ENCODE measurements at regions of chr6 and their contacts with region 1.

Region 1: DNA sequence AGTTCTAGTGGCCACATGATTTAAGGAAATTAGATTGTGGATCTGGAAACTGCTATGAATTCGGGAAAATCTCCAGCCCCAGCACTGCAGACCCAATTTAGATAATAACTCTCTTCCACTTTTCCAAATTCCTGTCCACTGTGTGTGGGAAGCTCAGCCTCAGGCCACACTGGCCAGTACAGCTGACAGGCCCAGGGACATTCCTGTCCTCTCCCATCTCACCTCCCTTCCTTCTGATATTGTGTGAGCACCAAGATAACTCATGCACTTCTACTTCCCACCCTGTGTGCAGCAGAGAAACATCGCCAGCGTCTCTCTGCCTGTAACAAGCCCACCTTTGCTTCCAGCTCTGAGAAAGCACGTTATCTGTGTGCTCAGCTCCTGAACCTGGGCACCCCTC is 145.1 kb upstream of the RREB1 start:
- DNase-seq: no peak
- ATAC-seq: no peak
- H3K4me3 ChIP-seq: no peak overlapping the region
- H3K27ac ChIP-seq: no peak overlapping the region
- H3K4me1 ChIP-seq: no peaks in the 10 kb centered on the region
- H3K27me3 ChIP-seq: no peaks in the 10 kb centered on the region
- CTCF ChIP-seq: no peak

Region 2: DNA sequence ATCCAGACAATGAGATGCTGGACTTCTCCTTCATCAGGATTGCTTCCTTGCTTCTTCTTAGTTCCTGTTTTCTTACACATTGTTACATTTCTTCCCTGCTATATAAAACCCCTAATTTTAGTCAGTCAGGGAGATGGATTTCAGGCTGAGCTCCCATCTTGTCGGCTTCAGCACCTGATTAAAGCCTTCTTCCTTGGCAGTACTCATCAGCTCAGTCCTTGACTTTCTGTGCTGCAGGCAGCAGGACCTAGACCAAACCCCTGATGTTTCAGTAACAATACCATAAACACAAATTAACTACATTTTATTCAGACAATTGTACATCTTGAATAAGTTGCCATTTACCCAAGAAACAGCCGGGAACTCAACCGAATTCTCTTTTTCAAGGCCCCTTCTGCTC is 11.3 kb before region 1 on chr6:
- intact Hi-C with region 1: loop called in 1 of 2 experiments (anchors 1 kb)
- DNase-seq: no peak
- ATAC-seq: no peak
- H3K4me3 ChIP-seq: no peak overlapping the region
- H3K27ac ChIP-seq: no peak overlapping the region
- H3K4me1 ChIP-seq: no peaks in the 10 kb centered on the region
- H3K27me3 ChIP-seq: no peaks in the 10 kb centered on the region
- CTCF ChIP-seq: no peak

Measured in psoas muscle (tissue), 8 donors.